Gastrocnemius medialis (tissue), 4 donors: ENCODE measurements at regions of chr6 and their contacts with region 1.

Region 1: GRCh38 chr6:3151706-3152105 is 5.6 kb downstream of the TUBB2A start:
- DNase-seq: no peak
- ATAC-seq: peak in 1 of 2 donors; percentile 33
- H3K4me3 ChIP-seq: no peak overlapping the region
- H3K27ac ChIP-seq: peak overlapping the region in 3 of 4 donors; percentile 7 to 45 (median 36)
- H3K4me1 ChIP-seq: peaks cover 5 to 11% of the 10 kb centered on the region in 2 donors
- H3K27me3 ChIP-seq: no peaks in the 10 kb centered on the region
- CTCF ChIP-seq: no peak
- POLR2A ChIP-seq: no peak

Region 2: DNA sequence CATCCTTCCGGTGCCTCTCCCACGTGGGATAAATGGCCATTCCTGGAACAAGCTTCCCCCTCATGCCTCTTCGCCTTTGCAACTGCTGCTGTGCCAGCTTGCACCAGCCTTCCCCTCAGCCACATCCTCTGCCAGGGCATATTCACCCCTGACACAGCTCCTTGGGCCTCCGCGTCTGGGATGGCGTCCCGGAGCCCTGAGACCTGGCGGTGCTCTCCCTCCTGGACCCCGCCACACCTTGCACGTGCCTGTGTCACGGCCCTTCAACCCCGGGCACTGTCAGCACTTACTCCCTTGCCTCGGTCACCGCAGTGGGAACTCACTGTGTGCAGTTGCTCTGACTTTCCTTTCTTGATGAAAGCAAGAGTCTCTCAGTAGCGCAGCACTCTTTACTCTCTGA is 20.0 kb before region 1 on chr6:
- in situ Hi-C with region 1: no loop called
- intact Hi-C with region 1: loop called (anchors 2 kb)
- DNase-seq: no peak
- ATAC-seq: no peak
- H3K4me3 ChIP-seq: no peak overlapping the region
- H3K27ac ChIP-seq: no peak overlapping the region
- H3K4me1 ChIP-seq: no peaks in the 10 kb centered on the region
- H3K27me3 ChIP-seq: no peaks in the 10 kb centered on the region
- CTCF ChIP-seq: no peak
- POLR2A ChIP-seq: no peak

Region 3: DNA sequence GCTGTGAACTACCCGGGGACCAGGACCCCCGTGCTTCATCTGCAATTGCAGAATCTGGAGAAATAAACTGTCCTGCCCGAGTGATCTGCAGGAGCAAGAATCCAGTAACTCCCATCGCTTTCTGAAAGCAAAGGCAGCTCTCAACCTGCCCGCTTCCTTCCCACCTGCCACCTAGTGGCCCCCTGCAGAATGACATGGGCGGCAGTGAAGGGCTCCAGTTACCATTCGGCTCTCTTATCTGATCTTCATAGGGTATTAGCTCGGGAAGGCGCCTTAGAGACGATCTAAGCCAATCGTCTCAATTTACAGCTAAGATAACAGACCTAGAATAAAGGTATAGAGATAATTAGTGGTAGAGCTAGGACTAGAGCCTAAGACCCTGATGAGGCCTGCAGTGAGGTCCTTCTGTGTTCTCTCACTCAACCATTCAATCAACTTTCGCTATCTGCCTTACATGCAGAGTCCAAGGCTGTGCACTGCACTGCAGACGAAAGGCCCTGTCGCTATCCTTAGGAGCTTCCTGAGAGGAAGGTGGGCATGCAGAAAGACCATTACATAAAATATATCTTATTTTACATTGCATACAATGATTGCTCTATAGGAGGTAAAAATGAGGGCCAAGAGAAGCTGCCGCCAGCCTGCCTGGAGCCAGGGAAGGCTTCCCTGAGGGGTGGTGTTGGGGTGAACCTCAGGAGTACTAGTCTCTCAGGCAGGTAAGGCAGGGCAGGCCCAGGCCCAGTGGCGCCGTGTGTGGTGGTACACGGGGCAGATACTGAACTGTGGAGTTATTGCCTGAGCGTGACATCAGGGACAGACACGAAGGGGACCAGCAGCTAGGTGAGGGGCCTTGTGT is 100.0 kb after region 1 on chr6:
- in situ Hi-C with region 1: no loop called
- intact Hi-C with region 1: no loop called
- DNase-seq: peak; percentile 51 to 66
- ATAC-seq: peak; percentile 74 to 93
- H3K4me3 ChIP-seq: peak overlapping the region in 2 of 4 donors; percentile 18 to 50
- H3K27ac ChIP-seq: no peak overlapping the region
- H3K4me1 ChIP-seq: peaks cover 8 to 13% of the 10 kb centered on the region in 2 donors
- H3K27me3 ChIP-seq: peaks cover 7 to 29% (median 26%) of the 10 kb centered on the region in 3 donors
- CTCF ChIP-seq: peak; percentile 88 to 96 (median 91)
- POLR2A ChIP-seq: no peak